ENCODE measurements at regions of chr15 and their contacts with region 1.

Region 1: GRCh38 chr15:22838292-22839042 is at the start of gene NIPA2:
- DNase-seq: peak; percentile 97
- ATAC-seq: peak; percentile 98
- H3K4me3 Mint-ChIP-seq: peak within 1 kb of the TSS; percentile 98
- H3K27ac Mint-ChIP-seq: peak within 1 kb of the TSS; percentile 97
- H3K4me1 Mint-ChIP-seq: peaks cover 23% of the 10 kb centered on the region
- H3K27me3 Mint-ChIP-seq: no peaks in the 10 kb centered on the region
- CTCF ChIP-seq: no peak
- total RNA-seq, gene NIPA2: 59.2 to 61.5 TPM

Region 2: GRCh38 chr15:22780267-22780666 is 58.2 kb before region 1 on chr15:
- CTCF ChIA-PET with region 1: no interaction called
- POLR2A ChIA-PET with region 1: no interaction called
- intact Hi-C with region 1: loop called (anchors 2 kb)
- DNase-seq: peak; percentile 32
- ATAC-seq: peak; percentile 81
- H3K4me3 Mint-ChIP-seq: no peak overlapping the region
- H3K27ac Mint-ChIP-seq: no peak overlapping the region
- H3K4me1 Mint-ChIP-seq: peaks cover 30% of the 10 kb centered on the region
- H3K27me3 Mint-ChIP-seq: no peaks in the 10 kb centered on the region
- CTCF ChIP-seq: no peak

Region 3: GRCh38 chr15:22795206-22796063 is 43.0 kb before region 1 on chr15:
- CTCF ChIA-PET with region 1: interaction called, 4 read pairs
- POLR2A ChIA-PET with region 1: interaction called, 3 read pairs
- intact Hi-C with region 1: loop called (anchors 5 kb)
- DNase-seq: no peak
- ATAC-seq: no peak
- H3K4me3 Mint-ChIP-seq: no peak overlapping the region
- H3K27ac Mint-ChIP-seq: peak overlapping the region; percentile 25
- H3K4me1 Mint-ChIP-seq: peaks cover 48% of the 10 kb centered on the region
- H3K27me3 Mint-ChIP-seq: no peaks in the 10 kb centered on the region
- CTCF ChIP-seq: no peak

Region 4: GRCh38 chr15:22819651-22820050 is 18.8 kb before region 1 on chr15:
- CTCF ChIA-PET with region 1: no interaction called
- POLR2A ChIA-PET with region 1: no interaction called
- intact Hi-C with region 1: loop called (anchors 2 kb)
- DNase-seq: no peak
- ATAC-seq: no peak
- H3K4me3 Mint-ChIP-seq: no peak overlapping the region
- H3K27ac Mint-ChIP-seq: no peak overlapping the region
- H3K4me1 Mint-ChIP-seq: peaks cover 6% of the 10 kb centered on the region
- H3K27me3 Mint-ChIP-seq: no peaks in the 10 kb centered on the region
- CTCF ChIP-seq: no peak

Region 5: DNA sequence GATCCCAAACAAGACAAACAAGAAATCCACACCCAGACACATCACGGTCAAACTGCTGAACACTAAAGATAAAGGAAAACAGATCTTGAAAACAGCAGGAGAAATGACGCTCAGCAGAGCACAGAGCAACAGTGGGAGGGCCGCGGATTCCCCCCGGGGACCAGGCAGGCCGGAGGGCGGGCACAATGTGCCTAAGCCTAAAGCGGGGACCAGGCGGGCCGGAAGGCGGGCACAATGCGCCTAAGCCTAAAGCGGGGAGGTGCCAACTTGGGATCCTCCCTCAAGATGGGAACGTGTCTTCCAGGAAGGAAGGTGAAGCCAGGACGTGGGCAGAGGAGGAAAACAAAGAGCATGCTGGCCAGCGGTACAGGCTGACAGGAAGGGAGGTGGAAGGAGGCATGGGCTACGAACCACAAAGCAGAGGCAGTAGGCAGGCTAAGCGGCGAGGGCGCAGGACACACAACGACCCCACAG is 110.6 kb after region 1 on chr15:
- CTCF ChIA-PET with region 1: no interaction called
- POLR2A ChIA-PET with region 1: no interaction called
- intact Hi-C with region 1: no loop called
- DNase-seq: peak; percentile 17
- ATAC-seq: peak; percentile 74
- H3K4me3 Mint-ChIP-seq: peak overlapping the region; percentile 16
- H3K27ac Mint-ChIP-seq: no peak overlapping the region
- H3K4me1 Mint-ChIP-seq: peaks cover 6% of the 10 kb centered on the region
- H3K27me3 Mint-ChIP-seq: peaks cover 2% of the 10 kb centered on the region
- CTCF ChIP-seq: no peak

Measured in activated CD8-positive, alpha-beta T cell treated with anti-CD3 and anti-CD28 coated beads for 36 hours (primary cell).